K562 (cell line): ENCODE measurements at regions of chr1 and their contacts with region 1.

Region 1: DNA sequence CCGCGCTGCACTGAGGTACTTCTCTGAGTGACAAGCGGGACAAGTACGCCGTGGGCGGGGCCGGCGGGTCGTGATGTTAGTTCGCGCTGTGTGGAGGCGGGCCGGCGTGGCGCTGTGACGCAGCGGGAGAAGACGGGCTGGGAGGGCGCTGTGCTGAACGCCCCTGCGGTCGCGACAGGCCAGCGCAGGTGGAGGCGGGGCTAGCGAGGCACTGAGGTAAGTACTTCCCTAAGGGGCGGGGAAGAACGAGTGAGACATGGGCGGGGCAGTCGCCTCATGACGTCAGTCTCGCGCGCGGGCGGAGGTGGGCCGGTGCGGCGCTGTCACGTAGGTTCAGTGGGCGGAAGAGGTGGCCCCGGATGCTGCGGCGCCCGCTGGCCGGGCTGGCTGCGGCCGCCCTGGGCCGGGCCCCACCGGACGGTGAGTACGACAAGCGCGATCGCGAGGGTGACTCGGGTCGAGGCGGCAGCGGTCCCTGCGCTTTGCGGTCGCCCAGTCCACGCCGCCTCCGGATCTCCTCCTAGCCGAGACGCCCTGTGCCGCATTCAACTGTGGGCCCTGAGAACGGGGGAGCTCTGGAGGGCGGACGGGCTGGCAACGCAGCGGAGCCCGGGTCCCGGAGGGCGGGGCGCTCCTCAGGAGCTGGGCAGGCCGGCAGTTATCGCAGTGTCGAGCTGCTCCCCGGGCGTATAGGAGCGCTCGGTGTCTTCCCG is at the start of gene GUK1:
- DNase-seq: peak; percentile 96 to 100 (median 98)
- ATAC-seq: peak; percentile 89
- H3K4me3 ChIP-seq: peak within 1 kb of the TSS; percentile 92
- H3K27ac ChIP-seq: peak within 1 kb of the TSS; percentile 96
- H3K4me1 ChIP-seq: peaks cover 48 to 61% of the 10 kb centered on the region in 2 experiments; a peak in 4 of 5 replicates
- H3K27me3 ChIP-seq: no peaks in the 10 kb centered on the region
- CTCF ChIP-seq: peak; percentile 49 to 80 (median 54)
- EP300 ChIP-seq: no peak; the same call in 1 of the 2 replicates
- POLR2A ChIP-seq: peak; percentile 95
- RAD21 ChIP-seq: no peak
- polyA plus RNA-seq, gene GUK1: 7.0 to 18.1 TPM

Region 2: DNA sequence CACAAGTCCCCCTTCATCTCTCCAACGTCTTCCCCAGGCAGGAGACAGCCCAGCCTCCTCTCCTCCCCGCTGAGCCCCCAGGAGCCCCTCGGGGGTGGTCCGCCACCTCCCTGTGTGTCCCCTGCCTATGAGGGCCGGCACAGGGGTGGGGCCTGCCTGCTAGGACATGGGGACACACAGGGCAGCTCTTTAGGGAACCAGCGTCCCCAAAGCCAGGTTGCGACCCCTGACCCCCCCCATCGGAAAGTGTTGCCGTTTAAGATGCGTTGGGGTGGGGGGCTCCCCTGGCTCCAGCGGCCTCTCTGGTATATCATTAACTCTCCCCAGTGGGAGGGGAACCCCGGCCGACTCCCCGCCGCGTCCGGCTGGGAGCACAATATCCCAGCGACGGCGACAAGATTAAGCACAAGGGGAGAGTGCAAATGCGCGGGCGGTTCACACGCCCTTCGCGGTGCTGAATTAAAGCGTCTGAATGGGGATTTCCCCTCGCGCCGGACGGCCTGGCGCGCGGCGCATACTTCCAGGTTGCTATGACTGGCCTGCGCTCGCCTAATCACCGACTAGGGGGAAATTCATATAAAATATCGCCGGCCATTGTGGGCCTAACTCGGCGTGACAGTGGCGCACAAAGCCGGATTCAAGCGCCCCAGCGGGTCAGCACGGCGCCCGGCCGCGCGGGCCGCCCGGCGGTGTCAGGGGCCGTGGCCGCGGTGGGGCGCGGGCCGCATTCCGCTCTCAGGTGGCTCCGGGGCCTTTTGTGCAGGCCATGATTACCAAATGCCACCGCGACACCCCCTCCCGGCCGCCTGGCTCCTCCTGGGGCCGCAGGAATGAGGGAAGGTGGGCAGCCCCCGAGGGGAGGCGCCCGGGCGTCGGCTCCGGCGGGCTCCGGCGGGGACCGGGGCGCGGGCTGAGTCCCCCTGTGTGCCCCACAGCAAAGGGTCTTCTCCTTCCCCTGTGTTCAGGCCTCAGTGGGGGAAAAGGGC is 102.4 kb before region 1 on chr1:
- CTCF ChIA-PET with region 1: no interaction called
- POLR2A ChIA-PET with region 1: no interaction called
- in situ Hi-C with region 1: no loop called
- intact Hi-C with region 1: no loop called
- DNase-seq: peak in 1 of 4 experiments; percentile 20
- ATAC-seq: peak; percentile 53
- H3K4me3 ChIP-seq: no peak overlapping the region
- H3K27ac ChIP-seq: no peak overlapping the region
- H3K4me1 ChIP-seq: peaks cover 0 to 18% of the 10 kb centered on the region in 2 experiments; a peak in 2 of 5 replicates
- H3K27me3 ChIP-seq: peaks cover 23 to 58% of the 10 kb centered on the region in 2 experiments; a peak in 4 of 5 replicates
- CTCF ChIP-seq: no peak
- EP300 ChIP-seq: no peak
- POLR2A ChIP-seq: no peak
- RAD21 ChIP-seq: no peak

Region 3: GRCh38 chr1:228082135-228082891 is 57.8 kb before region 1 on chr1 and contains the start of gene ARF1:
- CTCF ChIA-PET with region 1: interaction called, 3 read pairs
- POLR2A ChIA-PET with region 1: interaction called, 6 read pairs
- in situ Hi-C with region 1: no loop called
- intact Hi-C with region 1: loop called (anchors 2 kb)
- DNase-seq: peak; percentile 97 to 100 (median 98)
- ATAC-seq: peak; percentile 88
- H3K4me3 ChIP-seq: peak within 1 kb of the TSS; percentile 96
- H3K27ac ChIP-seq: peak within 1 kb of the TSS; percentile 98
- H3K4me1 ChIP-seq: peaks cover 34 to 55% of the 10 kb centered on the region in 2 experiments; a peak in 4 of 5 replicates
- H3K27me3 ChIP-seq: no peaks in the 10 kb centered on the region
- CTCF ChIP-seq: peak in 2 of 3 experiments; percentile 13 to 33; a peak in 2 of 6 replicates
- EP300 ChIP-seq: no peak
- POLR2A ChIP-seq: peak; percentile 86
- RAD21 ChIP-seq: 0 out of 4 replicates have a peak, but pooled peaks of 1 of the 2 experiments have one; percentile 23
- polyA plus RNA-seq, gene ARF1: 69.8 to 232 TPM

Region 4: DNA sequence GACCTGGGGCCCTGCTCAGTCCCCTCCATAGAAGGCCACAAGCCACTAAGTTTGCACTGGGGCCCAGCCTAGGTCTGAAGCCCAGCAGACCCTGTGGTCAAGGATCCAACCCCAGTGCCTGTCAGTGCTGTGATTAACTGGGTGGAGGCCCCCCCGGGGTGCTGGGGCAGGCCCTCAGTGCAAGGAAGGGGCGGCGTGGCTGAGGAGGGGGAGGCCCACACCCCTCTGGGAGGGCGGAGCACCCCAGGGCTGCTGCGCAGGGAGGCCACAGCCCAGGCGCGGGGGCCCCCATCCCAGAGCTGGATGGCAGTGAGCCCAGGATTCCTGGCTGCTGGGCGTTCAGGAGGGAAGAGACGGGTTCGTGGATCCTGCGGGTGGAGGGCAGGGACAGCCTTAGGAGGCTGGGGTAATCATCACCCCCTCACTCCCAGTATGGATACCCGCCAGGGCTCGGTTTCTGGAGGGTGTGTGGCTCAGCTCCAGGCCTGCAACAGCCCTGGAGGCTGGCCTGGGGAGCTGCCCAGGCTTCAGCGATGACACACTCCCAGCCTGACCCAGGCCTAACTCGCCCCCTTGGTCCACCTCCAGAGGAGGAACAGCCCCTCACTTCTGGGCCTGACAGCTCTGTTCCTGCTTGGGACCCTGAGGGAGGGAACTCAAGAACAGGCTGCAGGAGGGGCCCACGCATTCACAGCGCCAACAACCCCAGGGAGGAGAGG is 10.5 kb after region 1 on chr1:
- CTCF ChIA-PET with region 1: no interaction called
- POLR2A ChIA-PET with region 1: interaction called, 15 read pairs
- in situ Hi-C with region 1: no loop called
- intact Hi-C with region 1: no loop called
- DNase-seq: peak in 3 of 4 experiments; percentile 32 to 58 (median 50)
- ATAC-seq: peak; percentile 2
- H3K4me3 ChIP-seq: no peak overlapping the region
- H3K27ac ChIP-seq: peak overlapping the region; percentile 62; the same call in 2 of the 3 replicates
- H3K4me1 ChIP-seq: peaks cover 27 to 82% of the 10 kb centered on the region in 2 experiments
- H3K27me3 ChIP-seq: no peaks in the 10 kb centered on the region
- CTCF ChIP-seq: no peak
- EP300 ChIP-seq: no peak
- POLR2A ChIP-seq: no peak
- RAD21 ChIP-seq: no peak

Region 5: DNA sequence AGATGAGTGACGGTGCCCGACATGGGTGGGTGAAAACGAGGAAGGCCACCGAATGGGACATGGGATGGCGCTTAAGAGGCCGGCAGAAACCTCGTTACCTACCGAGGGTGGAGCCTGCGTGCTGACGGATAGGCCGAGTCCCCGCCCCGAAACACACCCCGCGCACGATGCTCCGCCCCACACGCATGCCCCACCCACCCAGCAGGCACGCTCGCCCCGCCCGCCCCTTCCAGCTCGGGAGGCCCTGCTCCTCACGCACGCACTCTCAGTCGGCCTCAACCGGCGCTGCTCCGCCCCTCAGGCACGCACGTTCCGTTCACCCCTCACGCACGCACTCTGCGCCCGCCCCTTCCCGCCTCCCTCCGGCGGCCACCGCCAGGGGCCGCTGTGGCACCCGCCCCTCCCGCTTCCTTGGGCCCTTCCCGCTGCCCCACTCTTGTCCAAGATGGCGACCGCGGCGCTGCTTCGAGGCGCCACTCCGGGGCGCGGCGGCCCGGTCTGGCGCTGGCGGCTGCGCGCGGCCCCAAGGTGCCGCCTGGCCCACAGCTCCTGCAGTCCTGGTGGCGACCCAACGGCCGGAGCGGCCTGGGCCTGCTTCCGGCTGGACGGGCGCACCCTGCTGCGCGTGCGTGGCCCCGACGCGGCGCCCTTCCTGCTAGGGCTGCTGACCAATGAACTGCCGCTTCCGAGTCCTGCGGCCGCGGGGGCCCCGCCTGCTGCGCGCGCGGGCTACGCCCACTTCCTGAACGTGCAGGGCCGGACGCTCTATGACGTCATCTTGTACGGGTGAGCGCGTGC is 25.5 kb after region 1 on chr1 and contains the start of gene IBA57:
- CTCF ChIA-PET with region 1: interaction called, 4 read pairs
- POLR2A ChIA-PET with region 1: interaction called, 47 read pairs
- in situ Hi-C with region 1: no loop called
- intact Hi-C with region 1: loop called (anchors 1 kb)
- DNase-seq: peak; percentile 98 to 100 (median 98)
- ATAC-seq: peak; percentile 92
- H3K4me3 ChIP-seq: peak within 1 kb of the TSS; percentile 78
- H3K27ac ChIP-seq: peak within 1 kb of the TSS; percentile 99
- H3K4me1 ChIP-seq: peaks cover 18 to 48% of the 10 kb centered on the region in 2 experiments
- H3K27me3 ChIP-seq: no peaks in the 10 kb centered on the region
- CTCF ChIP-seq: peak; percentile 84 to 96 (median 93)
- EP300 ChIP-seq: peak; percentile 39; the same call in 1 of the 2 replicates
- POLR2A ChIP-seq: peak; percentile 75; the same call in 1 of the 2 replicates
- RAD21 ChIP-seq: peak; percentile 23 to 30; a peak in 2 of 4 replicates
- polyA plus RNA-seq, gene IBA57: 0.77 to 1.0 TPM

Region 6: DNA sequence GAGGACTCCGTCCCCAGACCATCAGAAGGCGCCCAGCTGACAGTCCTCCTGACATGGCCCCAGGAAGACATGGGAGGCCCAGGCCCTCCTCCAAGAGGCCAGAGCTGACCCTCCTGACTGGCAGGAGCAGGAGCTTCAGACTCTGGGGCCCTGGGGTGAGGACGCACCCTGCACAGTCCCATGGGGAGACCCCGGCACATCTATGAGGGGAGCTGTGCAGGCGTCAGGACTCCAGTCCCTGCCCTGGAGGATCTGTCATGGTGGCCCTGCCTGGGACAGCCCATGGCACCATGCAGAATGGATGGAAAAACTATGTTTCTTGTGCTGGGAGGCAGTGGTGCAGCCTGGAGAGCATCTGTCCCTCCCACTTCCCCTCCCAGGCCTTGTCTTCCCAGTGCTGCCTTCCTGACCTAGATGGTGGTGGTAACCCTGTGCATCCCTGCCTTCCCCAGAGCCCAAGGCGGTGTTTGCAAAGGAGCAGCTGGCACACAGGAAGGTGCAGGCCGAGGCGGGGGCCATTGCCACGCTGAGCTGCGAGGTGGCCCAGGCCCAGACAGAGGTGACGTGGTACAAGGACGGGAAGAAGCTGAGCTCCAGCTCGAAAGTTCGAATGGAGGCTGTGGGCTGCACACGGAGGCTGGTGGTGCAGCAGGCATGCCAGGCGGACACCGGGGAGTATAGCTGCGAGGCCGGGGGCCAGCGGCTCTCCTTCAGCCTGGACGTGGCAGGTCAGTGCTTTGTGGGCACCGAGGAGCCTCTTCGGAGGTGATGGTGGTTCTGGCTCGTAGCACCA is 109.6 kb after region 1 on chr1:
- CTCF ChIA-PET with region 1: no interaction called
- POLR2A ChIA-PET with region 1: no interaction called
- in situ Hi-C with region 1: no loop called
- intact Hi-C with region 1: no loop called
- DNase-seq: no peak
- ATAC-seq: no peak
- H3K4me3 ChIP-seq: no peak overlapping the region
- H3K27ac ChIP-seq: no peak overlapping the region
- H3K4me1 ChIP-seq: no peaks in the 10 kb centered on the region; a peak in 2 of 5 replicates
- H3K27me3 ChIP-seq: no peaks in the 10 kb centered on the region
- CTCF ChIP-seq: no peak
- EP300 ChIP-seq: no peak
- POLR2A ChIP-seq: no peak
- RAD21 ChIP-seq: no peak

Region 7: DNA sequence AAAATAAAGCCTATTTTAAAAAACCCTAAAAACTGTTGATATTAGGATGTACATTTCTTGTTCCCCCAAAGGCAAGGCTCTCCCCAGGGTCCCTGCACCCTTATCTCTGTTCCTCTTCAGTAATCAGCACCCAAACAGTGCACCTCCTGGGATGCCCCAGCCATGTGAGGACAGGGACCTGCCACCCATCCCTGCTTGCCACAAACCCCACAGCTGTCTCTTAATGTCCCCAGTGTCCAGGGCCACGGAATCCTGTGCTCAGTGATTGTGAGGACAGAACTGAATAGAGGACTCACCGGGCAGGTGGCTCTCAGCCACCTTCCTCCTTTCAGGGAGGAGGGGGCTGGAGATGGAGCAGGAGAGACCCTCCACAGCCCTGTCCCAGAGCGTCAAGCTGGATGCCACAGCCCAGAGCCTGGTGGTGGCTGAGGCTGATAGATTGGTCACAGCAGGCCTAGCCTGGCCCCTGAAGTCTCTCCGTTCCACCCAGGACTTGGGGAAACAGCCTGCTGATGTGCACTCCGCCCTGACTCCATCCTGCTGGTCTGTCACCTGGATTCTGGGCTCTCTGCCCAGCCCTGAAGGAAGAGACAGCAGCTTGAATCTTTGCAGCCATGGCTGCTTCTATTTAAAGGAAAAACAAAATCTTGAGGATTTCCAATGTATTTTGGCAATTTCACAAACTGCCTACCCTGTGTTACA is 370.2 kb after region 1 on chr1:
- CTCF ChIA-PET with region 1: no interaction called
- POLR2A ChIA-PET with region 1: no interaction called
- in situ Hi-C with region 1: loop called (anchors 5 kb)
- intact Hi-C with region 1: no loop called
- DNase-seq: no peak
- ATAC-seq: no peak
- H3K4me3 ChIP-seq: no peak overlapping the region
- H3K27ac ChIP-seq: no peak overlapping the region
- H3K4me1 ChIP-seq: peaks cover 52 to 53% of the 10 kb centered on the region in 2 experiments
- H3K27me3 ChIP-seq: no peaks in the 10 kb centered on the region
- CTCF ChIP-seq: no peak
- EP300 ChIP-seq: no peak
- POLR2A ChIP-seq: no peak
- RAD21 ChIP-seq: no peak